Right ventricle myocardium inferior (tissue), 1 donor: ENCODE measurements at regions of chr10 and their contacts with region 1.

Region 1: DNA sequence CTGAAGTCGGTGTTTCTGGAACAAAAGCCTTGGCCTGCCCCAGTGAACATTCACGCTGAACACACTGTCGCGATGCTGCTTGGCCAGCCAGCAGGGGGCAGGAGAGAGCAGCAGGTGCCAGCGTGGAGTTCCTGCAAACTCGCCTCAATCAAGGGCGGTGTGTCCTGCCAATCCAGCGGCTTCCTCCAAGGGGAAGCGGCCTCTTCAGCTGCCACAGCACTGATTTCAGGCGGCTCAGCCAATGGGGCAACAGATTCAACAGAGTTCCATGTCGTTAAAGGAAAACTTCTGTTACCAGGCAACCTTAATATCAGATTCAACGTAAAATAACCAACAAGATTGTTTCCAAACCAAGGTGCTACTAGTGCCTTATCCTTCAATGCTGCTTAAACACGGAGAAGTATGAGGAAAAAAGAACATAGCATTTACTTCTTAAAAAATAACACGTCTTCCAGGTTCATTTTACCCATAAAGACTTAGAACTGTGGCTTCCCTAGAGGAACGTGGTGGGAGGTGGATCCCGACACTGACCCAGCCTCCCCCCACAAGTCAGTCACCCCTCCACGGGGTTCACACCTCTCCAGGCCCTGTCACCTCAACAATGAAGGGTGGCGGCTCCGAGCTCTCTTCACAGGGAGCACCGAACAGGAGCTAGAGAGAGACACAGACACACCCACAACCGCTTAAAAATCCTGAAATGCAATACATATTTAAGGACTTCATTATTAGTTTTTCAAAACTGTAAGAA is 178.2 kb downstream of the DIP2C start:
- DNase-seq: peak; percentile 95
- ATAC-seq: peak; percentile 93

Region 2: GRCh38 chr10:451021-451471 is 60.2 kb before region 1 on chr10:
- intact Hi-C with region 1: no loop called
- DNase-seq: no peak
- ATAC-seq: peak; percentile 57

Region 3: DNA sequence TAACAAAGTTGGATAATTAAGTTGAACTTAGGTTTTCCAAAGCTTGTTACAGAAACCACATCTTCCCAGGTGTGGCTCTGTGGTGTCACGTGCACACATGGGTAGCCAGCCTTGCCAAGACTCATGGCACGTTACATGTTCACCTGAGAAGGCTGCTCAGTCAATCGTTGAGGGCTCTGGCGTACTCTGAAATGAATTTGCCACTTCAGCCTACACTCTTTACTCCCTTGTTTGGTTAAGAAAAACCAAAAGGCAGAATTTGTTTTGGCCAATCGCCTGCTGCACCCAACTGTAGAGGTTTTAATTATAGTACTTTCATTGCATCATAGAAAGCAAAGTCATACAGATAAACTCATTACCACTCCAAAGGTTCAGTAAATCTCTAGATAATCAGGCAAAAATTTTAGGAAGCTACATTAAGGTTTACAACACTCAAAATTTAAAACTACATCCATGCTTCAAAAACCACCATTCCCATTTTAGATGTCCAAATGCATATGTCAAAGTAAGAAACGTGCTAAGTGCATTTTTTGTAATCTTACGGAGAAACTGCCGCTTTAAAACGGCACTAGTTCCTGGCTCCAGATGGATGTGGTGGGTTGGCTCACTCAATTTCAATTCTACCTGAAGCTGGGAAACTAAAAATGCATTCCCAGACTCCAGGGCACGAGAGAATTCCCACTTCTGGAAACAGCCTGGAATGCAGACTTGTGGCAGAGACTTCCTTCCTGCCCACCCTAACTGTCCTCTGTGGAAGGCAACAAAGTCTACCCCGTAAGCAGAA is 89.8 kb after region 1 on chr10:
- intact Hi-C with region 1: loop called (anchors 5 kb)
- DNase-seq: no peak
- ATAC-seq: no peak

Region 4: DNA sequence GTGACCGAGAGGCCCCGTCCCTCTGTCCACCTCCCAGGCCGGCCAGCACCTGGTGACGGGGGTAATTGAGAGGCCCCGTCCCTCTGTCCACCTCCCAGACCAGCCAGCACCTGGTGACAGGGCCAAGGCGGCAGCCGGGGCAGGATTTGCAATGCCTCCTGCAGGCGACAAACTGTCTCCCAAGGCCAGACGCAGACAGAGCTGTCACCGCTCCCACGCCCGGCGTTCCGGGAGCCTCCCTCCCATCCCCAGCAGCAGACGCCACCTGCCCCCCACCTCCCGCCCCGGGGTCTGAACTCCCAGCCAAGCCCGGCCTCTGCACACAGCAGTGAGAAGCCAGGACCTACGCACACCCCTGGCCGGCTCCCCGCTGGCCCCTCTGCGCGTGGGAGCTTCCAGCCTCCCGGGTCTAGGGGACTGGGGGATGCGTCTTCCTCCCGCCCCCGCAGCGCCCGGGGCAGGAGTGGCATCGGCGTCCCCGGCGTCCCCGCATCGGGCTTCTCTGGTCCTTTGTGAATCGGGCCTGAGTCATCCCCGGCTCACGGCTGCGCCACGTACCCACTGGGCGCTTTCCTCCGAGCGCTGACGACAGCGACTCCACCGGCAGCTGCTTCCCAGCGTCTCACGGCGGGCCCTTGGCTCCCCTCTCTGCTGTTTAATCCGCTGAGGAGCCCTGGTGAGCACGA is 273.3 kb after region 1 on chr10:
- intact Hi-C with region 1: loop called (anchors 2 kb)
- DNase-seq: peak; percentile 73
- ATAC-seq: peak; percentile 50

Region 5: DNA sequence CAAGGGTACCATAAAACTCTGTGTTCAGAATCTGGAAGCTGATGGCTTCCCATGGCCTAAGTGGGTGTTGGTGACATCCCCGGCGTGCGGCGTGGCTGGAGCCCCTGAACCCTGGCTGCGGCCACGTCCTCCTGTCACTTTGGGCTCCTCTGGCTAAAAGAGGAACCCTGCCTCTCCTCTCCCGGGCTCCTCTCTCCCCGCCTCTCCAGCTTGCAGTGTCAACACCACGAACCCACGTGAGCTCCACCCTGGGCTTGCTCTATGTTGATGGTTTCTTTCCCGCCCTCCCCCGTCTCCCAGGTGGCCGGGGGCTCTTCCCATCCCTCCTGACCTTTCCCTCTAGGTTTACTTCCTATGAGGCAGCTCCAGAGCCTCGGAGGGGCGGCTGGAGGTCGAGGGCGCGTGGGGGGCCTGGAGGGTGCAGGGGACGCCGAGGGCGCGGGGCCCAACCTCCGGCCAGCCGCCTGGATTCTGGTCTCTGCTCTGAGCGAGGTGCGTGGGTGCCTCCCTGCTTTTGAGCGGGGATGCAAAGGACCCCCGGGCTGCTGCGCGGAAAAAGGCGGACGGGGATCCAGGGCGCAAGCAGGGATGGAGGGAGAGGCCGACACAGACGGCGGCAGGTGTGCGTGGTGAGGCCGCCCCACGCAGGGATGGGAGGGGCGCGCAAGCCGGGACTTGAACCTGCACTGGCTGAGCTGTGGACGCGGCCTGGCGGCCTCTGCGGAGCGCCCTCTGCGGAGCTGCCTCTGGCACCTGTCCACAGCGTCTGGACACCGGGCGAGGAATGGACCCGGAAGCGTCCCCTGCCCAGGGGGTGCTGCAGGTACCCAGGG is 293.7 kb after region 1 on chr10:
- intact Hi-C with region 1: loop called (anchors 5 kb)
- DNase-seq: no peak
- ATAC-seq: no peak